ENCODE measurements at regions of chr15 and their contacts with region 1.

Region 1: GRCh38 chr15:63291507-63291906 is 14.1 kb downstream of the APH1B start:
- DNase-seq: no peak
- ATAC-seq: no peak
- H3K4me3 ChIP-seq: no peak overlapping the region
- H3K27ac ChIP-seq: peak overlapping the region; percentile 47 to 64
- H3K4me1 ChIP-seq: peaks cover 0 to 81% of the 10 kb centered on the region in 2 donors
- H3K27me3 ChIP-seq: no peaks in the 10 kb centered on the region
- CTCF ChIP-seq: no peak

Region 2: GRCh38 chr15:63019539-63020109 is 271.9 kb before region 1 on chr15:
- intact Hi-C with region 1: no loop called
- DNase-seq: no peak
- ATAC-seq: no peak
- H3K4me3 ChIP-seq: no peak overlapping the region
- H3K27ac ChIP-seq: no peak overlapping the region
- H3K4me1 ChIP-seq: peaks cover 0 to 11% of the 10 kb centered on the region in 2 donors
- H3K27me3 ChIP-seq: no peaks in the 10 kb centered on the region
- CTCF ChIP-seq: no peak

Region 3: GRCh38 chr15:63402498-63403253 is 111.2 kb after region 1 on chr15:
- intact Hi-C with region 1: loop called in 1 of 2 experiments (anchors 5 kb)
- DNase-seq: peak in 1 of 4 donors; percentile 37
- ATAC-seq: peak; percentile 85
- H3K4me3 ChIP-seq: no peak overlapping the region
- H3K27ac ChIP-seq: no peak overlapping the region
- H3K4me1 ChIP-seq: peaks cover 0 to 10% of the 10 kb centered on the region in 2 donors
- H3K27me3 ChIP-seq: no peaks in the 10 kb centered on the region
- CTCF ChIP-seq: peak; percentile 50 to 53

Region 4: GRCh38 chr15:63539521-63539920 is 248.0 kb after region 1 on chr15:
- intact Hi-C with region 1: no loop called
- DNase-seq: no peak
- ATAC-seq: no peak
- H3K4me3 ChIP-seq: no peak overlapping the region
- H3K27ac ChIP-seq: no peak overlapping the region
- H3K4me1 ChIP-seq: peaks cover 0 to 54% of the 10 kb centered on the region in 2 donors
- H3K27me3 ChIP-seq: no peaks in the 10 kb centered on the region
- CTCF ChIP-seq: no peak